IMR-90 (cell line): ENCODE measurements at regions of chr1 and their contacts with region 1.

Region 1: GRCh38 chr1:85200870-85201339 is at the start of gene SYDE2:
- DNase-seq: peak; percentile 58
- ATAC-seq: peak; percentile 90
- H3K4me3 ChIP-seq: peak within 1 kb of the TSS; percentile 73
- H3K27ac ChIP-seq: peak within 1 kb of the TSS; percentile 88
- H3K4me1 ChIP-seq: peaks cover 6% of the 10 kb centered on the region
- H3K27me3 ChIP-seq: no peaks in the 10 kb centered on the region
- CTCF ChIP-seq: no peak
- POLR2A ChIP-seq: peak; percentile 40; the same call in 1 of the 2 replicates
- RAD21 ChIP-seq: no peak
- total RNA-seq, gene SYDE2: 10.0 and 11.7 TPM in 2 replicates

Region 2: GRCh38 chr1:84668185-84668584 is 532.7 kb before region 1 on chr1:
- CTCF ChIA-PET with region 1: no interaction called
- POLR2A ChIA-PET with region 1: no interaction called
- dilution Hi-C with region 1: no loop called
- in situ Hi-C with region 1: no loop called
- intact Hi-C with region 1: no loop called
- DNase-seq: no peak
- ATAC-seq: no peak
- H3K4me3 ChIP-seq: no peak overlapping the region
- H3K27ac ChIP-seq: no peak overlapping the region
- H3K4me1 ChIP-seq: no peaks in the 10 kb centered on the region
- H3K27me3 ChIP-seq: no peaks in the 10 kb centered on the region
- CTCF ChIP-seq: 0 out of 2 replicates have a peak, but pooled peaks have one; percentile 14
- POLR2A ChIP-seq: no peak
- RAD21 ChIP-seq: peak; percentile 31; the same call in 1 of the 2 replicates

Region 3: GRCh38 chr1:85109475-85109874 is 91.4 kb before region 1 on chr1:
- CTCF ChIA-PET with region 1: interaction called, 5 read pairs
- POLR2A ChIA-PET with region 1: no interaction called
- dilution Hi-C with region 1: no loop called
- in situ Hi-C with region 1: no loop called
- intact Hi-C with region 1: loop called (anchors 5 kb)
- DNase-seq: peak; percentile 75
- ATAC-seq: peak; percentile 99
- H3K4me3 ChIP-seq: no peak overlapping the region
- H3K27ac ChIP-seq: no peak overlapping the region
- H3K4me1 ChIP-seq: no peaks in the 10 kb centered on the region
- H3K27me3 ChIP-seq: no peaks in the 10 kb centered on the region
- CTCF ChIP-seq: peak; percentile 92
- POLR2A ChIP-seq: no peak
- RAD21 ChIP-seq: peak; percentile 94

Region 4: GRCh38 chr1:85166351-85166750 is 34.6 kb before region 1 on chr1:
- CTCF ChIA-PET with region 1: no interaction called
- POLR2A ChIA-PET with region 1: no interaction called
- dilution Hi-C with region 1: no loop called
- in situ Hi-C with region 1: no loop called
- intact Hi-C with region 1: no loop called
- DNase-seq: peak; percentile 16
- ATAC-seq: no peak
- H3K4me3 ChIP-seq: no peak overlapping the region
- H3K27ac ChIP-seq: no peak overlapping the region
- H3K4me1 ChIP-seq: no peaks in the 10 kb centered on the region
- H3K27me3 ChIP-seq: no peaks in the 10 kb centered on the region
- CTCF ChIP-seq: no peak
- POLR2A ChIP-seq: no peak
- RAD21 ChIP-seq: no peak